Activated naive CD4-positive, alpha-beta T cell treated with anti-CD3 and anti-CD28 coated beads for 36 hours (primary cell): ENCODE measurements at regions of chr2 and their contacts with region 1.

Region 1: DNA sequence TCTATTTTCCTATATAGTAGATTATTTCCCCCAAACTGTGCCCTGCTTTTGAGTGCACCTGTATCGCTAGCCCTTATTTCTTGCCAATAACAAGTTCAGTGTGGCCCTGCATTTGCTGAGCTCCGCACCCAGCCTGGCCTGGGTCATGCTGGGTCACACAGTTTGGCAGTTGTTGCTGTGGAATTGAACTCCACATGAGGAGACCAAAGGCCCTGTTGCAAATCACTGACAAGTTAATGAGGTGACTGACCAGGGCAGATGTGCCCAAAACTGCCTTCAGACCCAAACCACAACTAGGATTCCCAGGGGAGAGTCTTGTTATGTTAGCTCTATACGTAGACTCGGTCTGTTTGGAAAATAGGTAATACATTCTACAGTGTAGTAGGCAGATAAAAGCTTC is 31.0 kb downstream of the COL4A4 start:
- DNase-seq: no peak
- H3K4me3 Mint-ChIP-seq: no peak overlapping the region
- H3K27ac Mint-ChIP-seq: no peak overlapping the region
- H3K4me1 Mint-ChIP-seq: no peaks in the 10 kb centered on the region
- H3K27me3 Mint-ChIP-seq: peaks cover 9% of the 10 kb centered on the region

Region 2: DNA sequence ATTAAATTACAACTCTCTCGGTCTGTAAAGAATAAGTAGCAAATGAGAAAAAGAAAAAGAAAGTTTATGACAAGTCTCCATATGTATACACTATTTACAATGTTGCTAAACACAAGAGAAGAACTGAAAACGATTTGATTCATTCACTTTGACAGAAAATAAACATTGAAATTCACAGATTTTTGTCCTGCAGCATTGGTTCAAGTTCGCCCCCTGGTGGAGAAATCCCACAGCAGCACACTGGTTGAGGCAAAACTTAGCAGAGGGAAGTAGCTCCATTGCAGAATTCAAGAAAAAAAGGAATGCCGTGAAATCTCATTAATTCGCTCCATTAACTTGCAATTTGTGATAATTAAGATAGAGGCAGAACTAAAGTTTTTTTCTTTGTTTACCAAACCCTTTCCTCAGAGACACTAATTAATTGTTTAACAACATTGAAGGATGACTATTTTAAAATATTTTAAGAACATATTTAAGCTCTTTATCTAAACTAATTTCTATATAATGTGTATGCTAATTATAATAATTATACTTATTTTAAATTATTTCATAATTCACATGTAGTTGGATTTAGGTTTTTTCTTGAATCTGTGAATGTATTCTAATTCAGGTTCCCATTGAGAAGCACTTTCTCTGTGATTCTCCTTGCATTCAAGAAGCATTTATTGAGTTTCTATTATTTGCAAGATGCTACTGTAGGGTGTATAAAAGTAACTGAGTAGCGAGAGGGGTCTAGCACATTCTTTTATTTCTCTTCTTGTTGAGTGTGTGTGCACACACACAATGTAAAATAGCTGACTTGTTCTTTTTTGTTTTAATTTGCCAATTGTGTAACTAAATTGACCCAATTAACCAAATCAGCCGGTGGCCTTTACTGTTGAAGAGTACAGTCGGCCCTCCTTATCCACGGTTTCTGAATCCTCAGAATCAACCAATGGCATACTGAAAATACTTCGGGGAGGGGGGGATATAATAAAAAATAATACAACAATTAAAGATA is 105.6 kb after region 1 on chr2:
- CTCF ChIA-PET with region 1: interaction called, 32 read pairs
- intact Hi-C with region 1: loop called (anchors 1 kb)
- DNase-seq: peak; percentile 82
- H3K4me3 Mint-ChIP-seq: no peak overlapping the region
- H3K27ac Mint-ChIP-seq: no peak overlapping the region
- H3K4me1 Mint-ChIP-seq: no peaks in the 10 kb centered on the region
- H3K27me3 Mint-ChIP-seq: peaks cover 7% of the 10 kb centered on the region

Region 3: DNA sequence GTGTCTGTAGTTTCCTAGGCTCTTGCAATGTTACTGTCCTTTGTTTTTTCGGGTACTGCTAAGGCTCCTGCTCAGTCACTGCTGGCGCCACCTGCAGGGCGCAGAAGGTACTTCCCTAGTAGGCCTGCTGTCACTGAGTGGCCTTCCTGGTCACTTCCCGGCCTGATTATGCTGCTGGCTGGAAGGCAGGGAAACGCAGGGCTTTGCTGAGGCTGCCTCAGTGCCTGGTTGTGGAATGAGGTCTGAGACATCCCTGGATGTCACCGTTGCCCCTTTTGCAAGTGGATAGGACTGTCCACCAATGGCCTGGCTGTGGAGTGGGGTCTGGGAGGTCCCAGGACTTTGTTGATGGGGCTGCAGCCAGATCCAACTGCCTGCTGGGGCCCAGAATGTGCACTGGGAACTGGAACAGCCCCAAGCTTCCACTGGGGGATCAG is 751.5 kb after region 1 on chr2:
- CTCF ChIA-PET with region 1: no interaction called
- intact Hi-C with region 1: loop called (anchors 2 kb)
- DNase-seq: peak; percentile 69
- H3K4me3 Mint-ChIP-seq: no peak overlapping the region
- H3K27ac Mint-ChIP-seq: no peak overlapping the region
- H3K4me1 Mint-ChIP-seq: peaks cover 2% of the 10 kb centered on the region
- H3K27me3 Mint-ChIP-seq: no peaks in the 10 kb centered on the region